ENCODE measurements at regions of chr7 and their contacts with region 1.

Region 1: DNA sequence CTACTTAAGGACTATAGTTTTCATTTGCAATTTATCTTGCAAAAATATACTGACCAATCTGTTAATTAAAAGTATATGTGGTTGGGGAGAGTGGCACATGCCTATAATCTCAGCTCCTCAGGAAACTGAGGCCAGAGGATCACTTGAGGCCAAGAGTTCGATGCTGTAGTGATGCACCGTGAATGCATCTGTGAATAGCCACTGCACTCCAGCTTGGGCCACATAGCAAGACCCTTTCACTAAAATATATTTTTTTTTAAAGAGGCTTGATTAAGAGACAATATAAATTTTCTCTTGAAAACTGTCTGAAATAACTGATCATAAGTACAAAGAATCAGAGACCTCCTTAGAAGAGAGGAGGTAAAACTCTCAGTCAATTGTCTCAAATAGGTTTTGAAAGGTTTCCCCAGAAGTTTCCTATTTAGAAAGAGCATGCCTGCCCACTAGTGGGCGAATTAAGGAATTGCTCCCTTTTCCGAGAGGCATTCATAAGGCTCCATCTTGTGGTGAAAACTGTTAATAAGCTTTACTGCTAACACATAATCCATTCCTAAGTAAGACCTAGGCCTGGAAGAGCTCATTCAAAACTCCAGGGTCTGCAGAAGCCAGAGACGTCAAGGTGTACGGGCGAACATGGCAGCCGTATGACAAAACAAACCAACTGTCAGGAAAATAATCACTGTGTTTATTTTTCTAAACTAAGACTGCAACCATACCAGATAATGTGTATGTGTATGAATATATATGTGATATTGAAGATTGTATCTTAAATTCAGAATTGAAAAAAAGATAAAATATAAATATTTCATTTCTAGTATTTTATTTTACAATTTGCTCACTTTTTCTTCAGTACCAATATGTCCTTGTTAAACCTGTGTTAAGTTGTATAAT is 6.8 kb upstream of the TAS2R40 start:
- DNase-seq: peak; percentile 25 to 87 (median 59)
- ATAC-seq: peak; percentile 98
- H3K4me3 ChIP-seq: no peak overlapping the region
- H3K4me3 Mint-ChIP-seq: no peak overlapping the region
- H3K27ac ChIP-seq: no peak overlapping the region
- H3K27ac Mint-ChIP-seq: no peak overlapping the region
- H3K4me1 ChIP-seq: no peaks in the 10 kb centered on the region
- H3K4me1 Mint-ChIP-seq: no peaks in the 10 kb centered on the region
- H3K27me3 ChIP-seq: no peaks in the 10 kb centered on the region
- H3K27me3 Mint-ChIP-seq: peaks cover 4% of the 10 kb centered on the region
- CTCF ChIP-seq: peak; percentile 100

Region 2: DNA sequence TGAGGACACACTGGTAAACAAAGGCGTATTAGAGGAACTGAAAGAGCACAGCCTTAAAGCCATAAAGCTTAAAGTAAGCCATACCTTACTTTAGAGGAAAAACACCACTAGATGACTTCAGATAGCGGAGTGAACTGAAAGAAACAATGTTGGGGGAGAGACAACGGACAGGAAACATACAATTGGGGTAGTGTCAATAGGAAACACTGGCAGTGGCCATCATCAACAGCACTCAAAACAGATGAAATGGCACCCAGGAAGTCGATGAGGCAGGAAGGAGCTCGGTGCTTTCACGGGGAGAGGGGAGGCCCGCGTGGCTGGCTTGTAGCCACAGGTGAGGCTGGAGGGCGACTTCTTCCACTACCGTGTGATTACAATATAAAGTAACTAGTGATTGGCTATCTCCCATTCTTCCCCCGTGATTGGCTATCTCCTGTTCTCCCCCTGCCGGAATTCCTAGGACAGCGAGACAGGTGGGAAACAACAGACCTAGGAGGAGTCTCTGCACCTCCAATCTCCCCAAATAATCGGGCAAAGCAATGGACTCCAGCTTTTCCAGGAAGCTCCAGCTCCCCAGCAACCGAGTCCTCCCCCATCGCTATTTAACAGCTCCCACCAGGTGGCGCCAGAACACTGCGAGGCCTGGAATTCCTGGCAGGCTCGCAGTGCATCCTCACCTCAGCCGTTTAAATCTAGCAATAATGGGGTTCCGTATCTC is 1239.1 kb before region 1 on chr7:
- CTCF ChIA-PET with region 1: interaction called, 7 read pairs
- POLR2A ChIA-PET with region 1: no interaction called
- intact Hi-C with region 1: loop called in 1 of 2 experiments (anchors 2 kb)
- DNase-seq: peak; percentile 17 to 81 (median 64)
- ATAC-seq: peak; percentile 82
- H3K4me3 ChIP-seq: peak overlapping the region; percentile 46 to 50
- H3K4me3 Mint-ChIP-seq: peak overlapping the region; percentile 79
- H3K27ac ChIP-seq: peak overlapping the region in 1 of 2 experiments; percentile 18
- H3K27ac Mint-ChIP-seq: peak overlapping the region; percentile 46
- H3K4me1 ChIP-seq: peaks cover 6% of the 10 kb centered on the region
- H3K4me1 Mint-ChIP-seq: peaks cover 22% of the 10 kb centered on the region
- H3K27me3 ChIP-seq: no peaks in the 10 kb centered on the region
- H3K27me3 Mint-ChIP-seq: no peaks in the 10 kb centered on the region
- CTCF ChIP-seq: peak; percentile 76

Region 3: GRCh38 chr7:142385491-142386340 is 829.3 kb before region 1 on chr7:
- CTCF ChIA-PET with region 1: interaction called, 4 read pairs
- POLR2A ChIA-PET with region 1: no interaction called
- intact Hi-C with region 1: loop called in 1 of 2 experiments (anchors 10 kb)
- DNase-seq: peak in 5 of 9 experiments; percentile 23 to 64 (median 52)
- ATAC-seq: peak; percentile 62
- H3K4me3 ChIP-seq: no peak overlapping the region
- H3K4me3 Mint-ChIP-seq: no peak overlapping the region
- H3K27ac ChIP-seq: no peak overlapping the region
- H3K27ac Mint-ChIP-seq: no peak overlapping the region
- H3K4me1 ChIP-seq: peaks cover 18% of the 10 kb centered on the region
- H3K4me1 Mint-ChIP-seq: peaks cover 26% of the 10 kb centered on the region
- H3K27me3 ChIP-seq: no peaks in the 10 kb centered on the region
- H3K27me3 Mint-ChIP-seq: no peaks in the 10 kb centered on the region
- CTCF ChIP-seq: peak; percentile 43

Region 4: GRCh38 chr7:142603870-142604448 is 611.1 kb before region 1 on chr7:
- CTCF ChIA-PET with region 1: interaction called, 11 read pairs
- POLR2A ChIA-PET with region 1: no interaction called
- intact Hi-C with region 1: loop called (anchors 1 to 2 kb)
- DNase-seq: peak; percentile 5 to 70 (median 48)
- ATAC-seq: peak; percentile 67
- H3K4me3 ChIP-seq: no peak overlapping the region
- H3K4me3 Mint-ChIP-seq: no peak overlapping the region
- H3K27ac ChIP-seq: no peak overlapping the region
- H3K27ac Mint-ChIP-seq: peak overlapping the region; percentile 28
- H3K4me1 ChIP-seq: no peaks in the 10 kb centered on the region
- H3K4me1 Mint-ChIP-seq: peaks cover 3% of the 10 kb centered on the region
- H3K27me3 ChIP-seq: no peaks in the 10 kb centered on the region
- H3K27me3 Mint-ChIP-seq: peaks cover 2% of the 10 kb centered on the region
- CTCF ChIP-seq: peak; percentile 68

Region 5: GRCh38 chr7:143013893-143014292 is 201.1 kb before region 1 on chr7:
- CTCF ChIA-PET with region 1: interaction called, 256 read pairs
- POLR2A ChIA-PET with region 1: no interaction called
- intact Hi-C with region 1: no loop called
- DNase-seq: no peak
- ATAC-seq: no peak
- H3K4me3 ChIP-seq: no peak overlapping the region
- H3K4me3 Mint-ChIP-seq: no peak overlapping the region
- H3K27ac ChIP-seq: no peak overlapping the region
- H3K27ac Mint-ChIP-seq: no peak overlapping the region
- H3K4me1 ChIP-seq: no peaks in the 10 kb centered on the region
- H3K4me1 Mint-ChIP-seq: no peaks in the 10 kb centered on the region
- H3K27me3 ChIP-seq: peaks cover 0 to 2% of the 10 kb centered on the region in 2 experiments
- H3K27me3 Mint-ChIP-seq: peaks cover 19% of the 10 kb centered on the region
- CTCF ChIP-seq: no peak

Region 6: GRCh38 chr7:143229054-143229790 is 14.2 kb after region 1 on chr7:
- CTCF ChIA-PET with region 1: interaction called, 15 read pairs
- POLR2A ChIA-PET with region 1: interaction called, 3 read pairs
- intact Hi-C with region 1: no loop called
- DNase-seq: no peak
- ATAC-seq: no peak
- H3K4me3 ChIP-seq: no peak overlapping the region
- H3K4me3 Mint-ChIP-seq: no peak overlapping the region
- H3K27ac ChIP-seq: no peak overlapping the region
- H3K27ac Mint-ChIP-seq: no peak overlapping the region
- H3K4me1 ChIP-seq: no peaks in the 10 kb centered on the region
- H3K4me1 Mint-ChIP-seq: no peaks in the 10 kb centered on the region
- H3K27me3 ChIP-seq: peaks cover 0 to 9% of the 10 kb centered on the region in 2 experiments
- H3K27me3 Mint-ChIP-seq: peaks cover 1% of the 10 kb centered on the region
- CTCF ChIP-seq: no peak

Measured in CD8-positive, alpha-beta T cell (primary cell).